ENCODE measurements at regions of chr2 and their contacts with region 1.

Region 1: GRCh38 chr2:99697811-99698568 is 208.2 kb upstream of the REV1 start:
- DNase-seq: no peak

Region 2: DNA sequence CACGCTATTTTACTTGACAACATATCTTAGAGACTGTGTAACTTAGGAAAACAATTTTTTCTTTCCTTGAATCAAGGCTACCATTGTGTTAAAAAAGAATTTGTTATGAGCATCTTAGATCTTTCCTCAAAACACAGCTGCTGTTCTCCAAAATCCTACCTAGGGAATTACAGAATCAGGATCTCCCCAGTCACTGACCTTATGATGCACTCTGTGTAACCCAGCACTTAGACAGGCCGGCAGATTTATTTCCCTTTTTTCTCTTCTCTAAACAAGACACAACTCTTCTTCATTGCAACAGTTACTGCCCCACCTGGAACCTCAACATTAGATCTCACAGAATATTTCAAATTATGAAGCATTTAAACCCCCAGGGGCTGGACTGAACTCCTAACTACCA is 570.0 kb before region 1 on chr2:
- intact Hi-C with region 1: no loop called
- DNase-seq: no peak

Region 3: DNA sequence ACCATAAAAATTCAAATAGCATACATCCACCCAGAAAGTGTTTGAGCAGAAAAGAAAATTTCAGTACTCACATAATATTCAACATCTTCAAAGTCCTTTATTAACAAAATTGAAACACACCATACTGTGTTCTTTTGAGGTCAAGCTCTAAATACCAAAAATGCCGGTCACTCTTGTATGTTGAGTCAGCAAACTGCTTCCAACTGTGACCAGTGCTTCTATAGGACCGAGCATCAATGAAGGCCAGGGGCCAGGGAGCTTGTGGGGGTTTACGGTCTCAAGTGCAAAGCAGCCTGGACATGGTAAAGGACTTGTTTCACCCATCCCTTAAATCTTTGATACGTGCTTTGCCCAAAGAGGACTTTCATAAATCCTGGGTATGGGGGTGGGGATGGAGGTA is 95.5 kb before region 1 on chr2:
- intact Hi-C with region 1: no loop called
- DNase-seq: no peak

Region 4: DNA sequence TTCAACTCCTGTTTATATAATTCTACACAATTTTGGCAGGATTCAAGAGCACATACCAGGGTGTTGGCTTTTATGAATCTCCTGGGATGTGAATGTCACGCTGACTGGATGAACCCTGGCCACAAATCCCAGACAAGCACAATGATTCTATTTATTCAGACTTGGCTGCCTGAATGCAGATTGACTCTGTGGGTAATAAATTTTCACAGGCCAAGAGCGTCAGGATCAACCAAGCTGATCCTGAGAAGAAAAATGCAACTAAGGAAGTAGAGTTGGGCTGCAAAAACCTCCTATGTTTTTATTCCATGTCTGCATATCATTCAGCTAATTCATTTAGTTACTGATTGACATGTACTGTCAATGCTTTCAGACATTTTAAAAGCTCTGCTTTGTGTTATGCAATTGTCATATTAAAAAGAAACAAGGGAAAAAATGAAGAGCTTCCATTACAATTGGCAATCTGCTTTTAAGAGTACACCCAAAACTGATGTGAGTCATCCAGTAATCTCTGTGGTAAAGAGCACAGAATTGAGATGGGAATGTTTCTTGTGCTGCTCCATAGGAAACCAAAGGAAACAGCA is 35.1 kb before region 1 on chr2:
- intact Hi-C with region 1: loop called (anchors 5 kb)
- DNase-seq: no peak

Measured in cardiac septum (tissue), 1 donor.